Heart left ventricle (tissue), 16 donors: ENCODE measurements at regions of chr10 and their contacts with region 1.

Region 1: DNA sequence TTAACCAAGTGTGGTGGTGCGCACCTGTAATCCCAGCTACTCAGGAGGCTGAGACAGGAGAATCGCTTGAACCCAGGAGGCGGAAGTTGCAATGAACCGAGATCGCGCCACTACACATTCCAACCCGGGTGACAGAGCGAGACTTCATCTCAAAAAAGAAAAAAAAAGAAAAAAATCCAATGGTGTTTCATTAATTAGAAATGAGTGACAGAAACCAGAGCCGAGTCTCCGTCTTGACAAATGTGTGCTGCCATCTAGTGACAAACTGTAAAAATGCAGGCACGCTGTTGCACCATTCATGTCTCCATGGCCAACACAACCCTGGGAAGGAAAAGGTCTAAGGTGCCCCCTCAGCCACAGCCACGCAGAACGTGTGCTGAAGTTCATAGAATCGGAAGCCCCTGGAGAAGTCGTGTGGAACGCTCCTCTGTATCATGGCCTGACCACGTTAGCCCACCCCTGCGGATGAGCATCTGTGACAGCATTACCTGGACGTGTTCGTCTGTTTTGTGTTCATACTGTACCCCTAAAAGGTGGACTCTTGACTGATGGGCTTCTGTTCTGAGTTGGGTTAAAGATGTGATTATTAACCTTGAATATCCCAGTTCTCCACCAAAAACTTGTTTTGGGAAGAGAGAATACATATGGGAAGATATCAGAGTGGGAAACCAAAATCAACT is 94.9 kb downstream of the LYZL2 start:
- DNase-seq: peak in 4 of 5 donors; percentile 62 to 66 (median 64)
- ATAC-seq: peak in 3 of 4 donors; percentile 66 to 71 (median 68)
- H3K4me3 ChIP-seq: no peak overlapping the region
- H3K27ac ChIP-seq: peak overlapping the region in 1 of 12 donors; percentile 91
- H3K4me1 ChIP-seq: peaks cover 0 to 87% (median 16%) of the 10 kb centered on the region in 12 donors
- H3K27me3 ChIP-seq: no peaks in the 10 kb centered on the region
- CTCF ChIP-seq: peak; percentile 83 to 95 (median 87)
- POLR2A ChIP-seq: no peak

Region 2: GRCh38 chr10:30392564-30392990 is 142.0 kb before region 1 on chr10:
- intact Hi-C with region 1: loop called (anchors 1 to 5 kb)
- DNase-seq: peak; percentile 63 to 87 (median 73)
- ATAC-seq: peak; percentile 86 to 99 (median 99)
- H3K4me3 ChIP-seq: peak overlapping the region in 2 of 12 donors; percentile 20 to 40
- H3K27ac ChIP-seq: no peak overlapping the region
- H3K4me1 ChIP-seq: peaks cover 0 to 14% (median 4%) of the 10 kb centered on the region in 12 donors
- H3K27me3 ChIP-seq: no peaks in the 10 kb centered on the region
- CTCF ChIP-seq: peak; percentile 86 to 98 (median 94)
- POLR2A ChIP-seq: no peak

Region 3: GRCh38 chr10:30398788-30399187 is 135.8 kb before region 1 on chr10:
- intact Hi-C with region 1: loop called in 8 of 10 experiments (anchors 2 to 5 kb)
- DNase-seq: no peak
- ATAC-seq: no peak
- H3K4me3 ChIP-seq: no peak overlapping the region
- H3K27ac ChIP-seq: no peak overlapping the region
- H3K4me1 ChIP-seq: peaks cover 0 to 10% (median 2%) of the 10 kb centered on the region in 12 donors
- H3K27me3 ChIP-seq: no peaks in the 10 kb centered on the region
- CTCF ChIP-seq: no peak
- POLR2A ChIP-seq: no peak

Region 4: DNA sequence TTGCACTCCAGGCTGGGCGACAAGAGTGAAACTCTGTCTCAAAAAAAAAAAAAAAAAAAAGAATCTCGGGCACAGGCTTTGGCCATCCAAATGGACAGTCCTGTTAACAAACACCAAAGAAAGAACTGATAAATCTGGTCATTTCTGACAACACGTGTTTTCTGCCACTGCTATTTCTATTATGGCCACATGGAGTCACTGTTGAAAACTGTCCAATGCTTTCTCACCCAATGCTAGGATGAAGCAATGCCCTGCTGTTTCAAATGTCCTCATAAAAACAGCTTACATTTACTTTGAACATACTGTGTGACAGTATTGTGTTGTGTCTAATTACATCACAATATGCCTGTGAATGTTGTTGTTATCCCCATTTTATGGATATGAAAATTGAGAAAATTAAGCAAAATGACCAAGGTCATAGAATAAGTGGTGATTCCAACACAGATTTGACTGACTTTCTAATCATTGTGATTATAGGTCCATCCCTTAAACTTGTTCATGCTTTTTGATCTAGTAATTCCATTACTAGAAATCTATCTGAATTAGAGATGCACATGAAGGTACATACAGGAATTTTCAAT is 120.5 kb before region 1 on chr10:
- intact Hi-C with region 1: loop called (anchors 1 to 5 kb)
- DNase-seq: no peak
- ATAC-seq: peak; percentile 53 to 83 (median 74)
- H3K4me3 ChIP-seq: no peak overlapping the region
- H3K27ac ChIP-seq: no peak overlapping the region
- H3K4me1 ChIP-seq: peaks cover 0 to 24% (median 0%) of the 10 kb centered on the region in 12 donors
- H3K27me3 ChIP-seq: no peaks in the 10 kb centered on the region
- CTCF ChIP-seq: peak; percentile 72 to 86 (median 76)
- POLR2A ChIP-seq: no peak

Region 5: GRCh38 chr10:30583778-30584415 is 49.3 kb after region 1 on chr10:
- intact Hi-C with region 1: loop called in 6 of 10 experiments (anchors 2 to 10 kb)
- DNase-seq: peak in 4 of 5 donors; percentile 66 to 83 (median 77)
- ATAC-seq: peak; percentile 85 to 97 (median 90)
- H3K4me3 ChIP-seq: peak overlapping the region in 10 of 12 donors; percentile 24 to 52 (median 42)
- H3K27ac ChIP-seq: peak overlapping the region; percentile 34 to 91 (median 82)
- H3K4me1 ChIP-seq: peaks cover 0 to 50% (median 11%) of the 10 kb centered on the region in 12 donors
- H3K27me3 ChIP-seq: no peaks in the 10 kb centered on the region
- CTCF ChIP-seq: peak in 1 of 12 donors; percentile 6
- POLR2A ChIP-seq: no peak

Region 6: DNA sequence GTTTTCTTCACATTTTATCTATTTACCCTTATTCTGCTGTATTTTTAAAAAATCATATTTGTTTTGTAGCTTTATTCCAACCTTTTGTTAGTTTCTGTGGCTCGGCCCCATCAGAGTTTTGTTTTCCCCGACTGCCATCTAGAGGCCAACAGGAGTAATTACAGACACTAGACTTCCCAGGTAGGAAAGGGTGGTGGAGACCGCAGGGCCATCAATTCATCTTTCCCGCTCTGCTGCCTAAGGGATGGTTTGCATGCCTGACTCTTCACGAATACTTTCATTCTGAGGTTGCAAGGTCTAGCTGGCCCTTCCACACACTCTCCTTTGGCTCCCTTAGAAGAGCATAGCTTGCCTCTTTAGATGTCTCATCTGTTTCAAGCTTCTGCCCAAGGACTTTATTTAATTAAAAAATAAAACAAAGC is 56.7 kb after region 1 on chr10:
- intact Hi-C with region 1: loop called in 5 of 10 experiments (anchors 2 to 10 kb)
- DNase-seq: peak in 2 of 5 donors; percentile 21 to 30
- ATAC-seq: peak in 2 of 4 donors; percentile 66 to 70
- H3K4me3 ChIP-seq: no peak overlapping the region
- H3K27ac ChIP-seq: no peak overlapping the region
- H3K4me1 ChIP-seq: peaks cover 0 to 26% (median 0%) of the 10 kb centered on the region in 12 donors
- H3K27me3 ChIP-seq: peaks cover 0 to 8% (median 0%) of the 10 kb centered on the region in 9 donors
- CTCF ChIP-seq: peak; percentile 70 to 94 (median 79)
- POLR2A ChIP-seq: no peak